ENCODE measurements at regions of chr18 and their contacts with region 1.

Region 1: GRCh38 chr18:57898506-57899124 is 95.5 kb upstream of the ATP8B1 start:
- DNase-seq: no peak
- H3K4me3 ChIP-seq: no peak overlapping the region
- H3K27ac ChIP-seq: no peak overlapping the region
- H3K4me1 ChIP-seq: no peaks in the 10 kb centered on the region
- CTCF ChIP-seq: no peak

Region 2: GRCh38 chr18:57913686-57914085 is 15.1 kb after region 1 on chr18:
- CTCF ChIA-PET with region 1: no interaction called
- POLR2A ChIA-PET with region 1: no interaction called
- intact Hi-C with region 1: loop called (anchors 1 kb)
- DNase-seq: no peak
- H3K4me3 ChIP-seq: no peak overlapping the region
- H3K27ac ChIP-seq: no peak overlapping the region
- H3K4me1 ChIP-seq: no peaks in the 10 kb centered on the region
- CTCF ChIP-seq: no peak

Region 3: DNA sequence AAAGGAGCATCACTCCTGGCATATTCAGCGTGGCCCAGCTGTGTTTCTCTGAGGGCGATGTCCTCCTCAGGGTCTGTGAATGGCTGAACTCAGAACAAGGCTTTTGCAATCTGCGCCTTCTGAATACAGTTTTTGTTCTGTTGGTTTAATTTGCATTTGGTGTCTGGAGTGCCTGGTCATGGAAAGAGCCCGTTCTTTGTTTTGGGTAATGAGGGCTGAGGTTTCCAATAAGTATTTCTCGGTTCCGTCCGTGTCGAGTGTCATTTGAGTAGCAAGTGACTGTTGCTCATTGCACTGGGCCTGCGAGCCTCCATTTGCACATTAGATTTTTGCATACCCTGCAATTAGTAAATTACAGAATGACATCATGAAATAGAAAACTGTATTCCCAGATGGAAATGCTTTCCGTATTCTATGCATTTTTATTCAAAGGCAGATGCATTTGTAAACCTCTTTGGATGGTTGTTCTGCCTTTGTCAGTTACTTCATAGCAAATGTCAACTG is 202.7 kb after region 1 on chr18:
- CTCF ChIA-PET with region 1: no interaction called
- POLR2A ChIA-PET with region 1: no interaction called
- intact Hi-C with region 1: no loop called
- DNase-seq: no peak
- H3K4me3 ChIP-seq: no peak overlapping the region
- H3K27ac ChIP-seq: no peak overlapping the region
- H3K4me1 ChIP-seq: no peaks in the 10 kb centered on the region
- CTCF ChIP-seq: no peak

Measured in OCI-LY7 (cell line).